HepG2 (cell line): ENCODE measurements at regions of chr16 and their contacts with region 1.

Region 1: GRCh38 chr16:85220125-85220839 is 108.0 kb upstream of the CIBAR2 start:
- DNase-seq: peak; percentile 22
- ATAC-seq: peak; percentile 70
- H3K4me3 ChIP-seq: peak overlapping the region; percentile 18 to 48 (median 45); a peak in 5 of 6 replicates
- H3K27ac ChIP-seq: no peak overlapping the region
- H3K4me1 ChIP-seq: peaks cover 39% of the 10 kb centered on the region
- H3K27me3 ChIP-seq: peaks cover 0 to 2% of the 10 kb centered on the region in 2 experiments; a peak in 1 of 5 replicates
- CTCF ChIP-seq: peak; percentile 31; the same call in 1 of the 2 replicates
- EP300 ChIP-seq: no peak
- POLR2A ChIP-seq: no peak
- RAD21 ChIP-seq: peak; percentile 14; the same call in 1 of the 2 replicates

Region 2: DNA sequence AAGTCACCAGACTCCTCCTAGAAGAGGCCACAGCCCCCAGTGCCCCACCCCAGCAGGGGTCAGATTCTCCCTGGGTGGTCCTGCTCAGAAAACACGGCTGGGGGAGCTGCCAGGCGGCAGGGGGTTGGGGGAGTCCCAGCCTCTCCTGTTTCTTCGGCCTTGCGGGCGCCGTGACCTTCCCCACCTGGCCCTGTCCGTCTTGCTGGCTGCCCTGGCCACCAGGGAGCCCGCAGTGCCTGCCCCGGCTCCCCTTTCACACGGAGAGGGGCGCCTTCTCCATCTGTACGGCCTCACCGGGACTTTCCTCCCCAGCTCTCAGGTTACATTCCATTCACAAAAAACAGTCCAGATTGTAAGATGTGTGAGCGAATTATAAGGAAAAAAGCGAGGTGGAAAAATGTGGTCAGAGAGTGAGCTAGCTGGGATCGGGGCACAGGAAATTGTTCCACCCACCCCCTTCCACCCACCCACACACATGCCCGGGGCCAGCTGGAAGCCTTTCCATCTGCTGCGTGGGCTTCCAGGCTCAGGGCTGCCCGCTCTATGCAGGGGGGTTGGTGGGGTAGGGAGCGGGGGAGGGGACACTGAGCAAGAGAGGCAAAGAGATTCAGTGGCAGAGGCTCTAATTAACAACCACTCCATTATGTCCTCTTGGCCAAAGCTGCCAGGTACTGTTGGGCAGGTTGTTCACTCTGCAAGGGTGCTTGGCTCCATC is 93.4 kb before region 1 on chr16:
- CTCF ChIA-PET with region 1: no interaction called
- POLR2A ChIA-PET with region 1: no interaction called
- in situ Hi-C with region 1: loop called (anchors 10 kb)
- intact Hi-C with region 1: no loop called
- DNase-seq: no peak
- ATAC-seq: peak; percentile 44
- H3K4me3 ChIP-seq: peak overlapping the region in 1 of 3 experiments; percentile 47; a peak in 1 of 6 replicates
- H3K27ac ChIP-seq: no peak overlapping the region
- H3K4me1 ChIP-seq: peaks cover 33% of the 10 kb centered on the region
- H3K27me3 ChIP-seq: peaks cover 13 to 52% of the 10 kb centered on the region in 2 experiments; a peak in 4 of 5 replicates
- CTCF ChIP-seq: peak; percentile 18; the same call in 1 of the 2 replicates
- EP300 ChIP-seq: no peak
- POLR2A ChIP-seq: no peak
- RAD21 ChIP-seq: no peak

Region 3: DNA sequence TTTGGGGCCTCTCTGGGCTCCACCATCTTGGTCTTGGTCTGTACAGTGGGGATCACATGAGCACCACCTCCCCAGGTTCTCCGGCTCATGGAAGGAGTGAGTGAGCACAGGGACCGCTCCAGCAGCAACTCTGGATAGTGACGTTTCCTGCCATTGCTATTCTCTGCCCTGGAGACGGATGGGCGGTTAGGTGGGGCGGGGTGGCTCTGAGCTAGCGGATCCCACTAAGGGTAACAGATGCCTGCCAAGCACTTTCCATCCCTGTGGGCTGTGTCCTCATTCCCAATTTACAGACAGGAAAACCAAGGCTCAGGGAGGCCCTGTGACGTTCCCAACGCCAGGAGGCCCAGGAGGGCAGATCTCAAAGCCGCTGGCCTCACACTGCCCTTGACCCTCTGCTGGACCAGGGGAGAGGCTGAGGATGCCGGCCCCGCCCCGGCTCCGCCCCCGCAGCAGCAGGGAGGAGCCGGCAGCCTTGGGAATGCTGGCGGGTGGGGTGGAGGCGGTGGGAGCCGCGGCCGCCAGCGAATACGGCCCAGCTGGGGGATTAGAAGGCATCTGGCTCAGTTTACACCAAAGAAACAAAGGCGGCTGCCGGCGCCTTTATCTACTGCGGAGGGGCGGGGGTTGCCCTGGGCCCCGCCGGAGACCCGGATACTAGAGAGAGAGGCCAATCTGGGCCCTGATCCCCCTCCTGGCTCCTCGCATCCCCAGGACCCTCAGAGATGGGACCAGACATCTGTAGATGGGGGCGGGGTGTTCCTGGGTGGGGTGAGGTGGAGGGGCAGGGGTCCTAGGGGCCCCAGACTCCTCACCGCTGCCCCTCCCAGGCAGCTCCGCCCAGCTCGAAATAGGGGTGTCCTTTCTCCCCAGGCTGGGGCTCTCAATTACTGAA is 14.3 kb after region 1 on chr16:
- CTCF ChIA-PET with region 1: no interaction called
- POLR2A ChIA-PET with region 1: no interaction called
- in situ Hi-C with region 1: no loop called
- intact Hi-C with region 1: no loop called
- DNase-seq: peak; percentile 70
- ATAC-seq: peak; percentile 88
- H3K4me3 ChIP-seq: no peak overlapping the region
- H3K27ac ChIP-seq: no peak overlapping the region
- H3K4me1 ChIP-seq: peaks cover 14% of the 10 kb centered on the region
- H3K27me3 ChIP-seq: no peaks in the 10 kb centered on the region; a peak in 1 of 5 replicates
- CTCF ChIP-seq: peak; percentile 62
- EP300 ChIP-seq: 0 out of 4 replicates have a peak, but pooled peaks of 1 of the 2 experiments have one; percentile 9
- POLR2A ChIP-seq: no peak
- RAD21 ChIP-seq: no peak